GM12878 (cell line): ENCODE measurements at regions of chr1 and their contacts with region 1.

Region 1: GRCh38 chr1:161962091-161962887 is 61.4 kb downstream of the OLFML2B start:
- DNase-seq: peak; percentile 70
- ATAC-seq: peak; percentile 99
- H3K4me3 ChIP-seq: peak overlapping the region; percentile 54; the same call in 1 of the 2 replicates
- H3K27ac ChIP-seq: peak overlapping the region; percentile 28; the same call in 1 of the 2 replicates
- H3K4me1 ChIP-seq: peaks cover 5% of the 10 kb centered on the region; the same call in 1 of the 2 replicates
- H3K27me3 ChIP-seq: no peaks in the 10 kb centered on the region
- CTCF ChIP-seq: no peak
- EP300 ChIP-seq: no peak
- POLR2A ChIP-seq: no peak
- RAD21 ChIP-seq: no peak

Region 2: GRCh38 chr1:161801955-161802354 is 160.3 kb before region 1 on chr1:
- CTCF ChIA-PET with region 1: no interaction called
- POLR2A ChIA-PET with region 1: no interaction called
- RAD21 ChIA-PET with region 1: no interaction called
- SMC1A ChIA-PET with region 1: no interaction called
- in situ Hi-C with region 1: no loop called
- intact Hi-C with region 1: no loop called
- DNase-seq: no peak
- ATAC-seq: no peak
- H3K4me3 ChIP-seq: no peak overlapping the region
- H3K27ac ChIP-seq: no peak overlapping the region
- H3K4me1 ChIP-seq: no peaks in the 10 kb centered on the region
- H3K27me3 ChIP-seq: no peaks in the 10 kb centered on the region
- CTCF ChIP-seq: no peak
- EP300 ChIP-seq: no peak
- POLR2A ChIP-seq: no peak
- RAD21 ChIP-seq: no peak

Region 3: DNA sequence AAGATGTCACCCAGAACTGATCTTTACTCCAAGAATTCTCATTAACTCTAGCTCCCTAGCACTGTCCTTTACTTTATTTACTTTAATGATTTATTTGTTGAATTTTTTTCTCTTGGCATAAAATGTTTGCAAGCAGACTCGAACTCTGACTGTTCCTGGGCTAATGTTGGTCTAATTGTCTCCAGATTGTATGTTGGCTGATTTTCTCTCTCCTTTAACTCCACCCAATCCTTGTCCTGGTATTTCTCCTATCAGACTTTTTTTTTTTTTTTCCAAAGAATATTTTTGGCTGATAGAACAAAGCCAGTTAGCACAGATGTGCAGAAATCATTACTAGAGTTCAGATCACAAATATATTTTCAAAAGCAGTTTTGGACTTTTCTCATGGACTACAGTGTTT is 113.6 kb before region 1 on chr1:
- CTCF ChIA-PET with region 1: no interaction called
- POLR2A ChIA-PET with region 1: no interaction called
- RAD21 ChIA-PET with region 1: no interaction called
- SMC1A ChIA-PET with region 1: no interaction called
- in situ Hi-C with region 1: no loop called
- intact Hi-C with region 1: no loop called
- DNase-seq: no peak
- ATAC-seq: no peak
- H3K4me3 ChIP-seq: no peak overlapping the region
- H3K27ac ChIP-seq: no peak overlapping the region
- H3K4me1 ChIP-seq: no peaks in the 10 kb centered on the region
- H3K27me3 ChIP-seq: no peaks in the 10 kb centered on the region
- CTCF ChIP-seq: no peak
- EP300 ChIP-seq: no peak
- POLR2A ChIP-seq: no peak
- RAD21 ChIP-seq: no peak

Region 4: DNA sequence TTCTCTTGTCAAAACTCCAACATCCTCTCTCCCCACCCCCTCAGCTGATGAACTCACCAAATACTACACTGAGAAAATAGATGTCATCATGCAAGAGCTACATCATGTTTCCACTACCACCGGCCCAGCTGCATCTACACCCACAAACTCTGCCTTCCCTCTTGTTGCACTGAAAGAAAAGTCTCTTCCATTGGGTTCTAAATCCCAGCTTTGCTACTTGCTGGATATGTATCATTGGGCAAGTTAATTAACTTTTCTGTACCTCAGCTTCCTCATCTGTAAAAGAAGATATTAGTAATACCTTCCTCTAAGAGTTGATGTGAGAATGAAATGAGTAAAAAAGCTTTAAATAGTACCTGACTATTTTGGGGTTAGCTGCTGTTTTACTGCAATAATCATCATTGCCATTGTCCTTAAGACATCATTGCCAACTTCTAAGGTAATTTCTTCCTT is 47.2 kb before region 1 on chr1:
- CTCF ChIA-PET with region 1: interaction called, 5 read pairs
- POLR2A ChIA-PET with region 1: interaction called, 3 read pairs
- RAD21 ChIA-PET with region 1: interaction called, 4 read pairs
- SMC1A ChIA-PET with region 1: interaction called, 4 read pairs
- in situ Hi-C with region 1: no loop called
- intact Hi-C with region 1: loop called (anchors 5 kb)
- DNase-seq: peak; percentile 53
- ATAC-seq: peak; percentile 89
- H3K4me3 ChIP-seq: peak overlapping the region; percentile 21; the same call in 1 of the 2 replicates
- H3K27ac ChIP-seq: peak overlapping the region; percentile 71
- H3K4me1 ChIP-seq: peaks cover 19% of the 10 kb centered on the region
- H3K27me3 ChIP-seq: no peaks in the 10 kb centered on the region
- CTCF ChIP-seq: no peak
- EP300 ChIP-seq: peak in 1 of 2 experiments; percentile 33; a peak in 1 of 4 replicates
- POLR2A ChIP-seq: no peak
- RAD21 ChIP-seq: no peak